OCI-LY7 (cell line): ENCODE measurements at regions of chr5 and their contacts with region 1.

Region 1: GRCh38 chr5:170791325-170791954 is 7.9 kb downstream of the GABRP start:
- DNase-seq: peak; percentile 22
- H3K4me3 ChIP-seq: no peak overlapping the region
- H3K27ac ChIP-seq: no peak overlapping the region
- H3K4me1 ChIP-seq: no peaks in the 10 kb centered on the region
- CTCF ChIP-seq: peak; percentile 68

Region 2: DNA sequence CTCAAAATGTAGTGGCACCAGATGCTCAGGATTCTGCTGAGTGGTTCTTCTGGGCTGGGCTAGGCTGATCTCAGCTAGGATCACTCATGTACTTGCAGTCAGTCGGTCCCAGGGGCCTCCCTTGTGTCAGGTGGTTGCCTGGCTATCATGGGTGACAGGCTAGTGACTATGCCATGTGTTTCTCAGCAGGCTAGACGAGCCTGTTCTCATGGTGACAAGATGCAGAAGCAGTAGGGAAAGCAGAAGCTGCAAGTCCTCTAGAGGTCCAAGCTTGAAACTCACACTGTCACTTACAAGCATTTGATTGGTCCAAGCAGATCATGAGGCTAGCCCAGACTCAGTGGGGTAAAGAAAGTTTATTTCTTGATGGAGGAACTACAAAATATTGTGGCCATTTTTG is 387.0 kb before region 1 on chr5:
- CTCF ChIA-PET with region 1: no interaction called
- POLR2A ChIA-PET with region 1: no interaction called
- intact Hi-C with region 1: no loop called
- DNase-seq: peak; percentile 6
- H3K4me3 ChIP-seq: no peak overlapping the region
- H3K27ac ChIP-seq: no peak overlapping the region
- H3K4me1 ChIP-seq: no peaks in the 10 kb centered on the region
- CTCF ChIP-seq: no peak

Region 3: DNA sequence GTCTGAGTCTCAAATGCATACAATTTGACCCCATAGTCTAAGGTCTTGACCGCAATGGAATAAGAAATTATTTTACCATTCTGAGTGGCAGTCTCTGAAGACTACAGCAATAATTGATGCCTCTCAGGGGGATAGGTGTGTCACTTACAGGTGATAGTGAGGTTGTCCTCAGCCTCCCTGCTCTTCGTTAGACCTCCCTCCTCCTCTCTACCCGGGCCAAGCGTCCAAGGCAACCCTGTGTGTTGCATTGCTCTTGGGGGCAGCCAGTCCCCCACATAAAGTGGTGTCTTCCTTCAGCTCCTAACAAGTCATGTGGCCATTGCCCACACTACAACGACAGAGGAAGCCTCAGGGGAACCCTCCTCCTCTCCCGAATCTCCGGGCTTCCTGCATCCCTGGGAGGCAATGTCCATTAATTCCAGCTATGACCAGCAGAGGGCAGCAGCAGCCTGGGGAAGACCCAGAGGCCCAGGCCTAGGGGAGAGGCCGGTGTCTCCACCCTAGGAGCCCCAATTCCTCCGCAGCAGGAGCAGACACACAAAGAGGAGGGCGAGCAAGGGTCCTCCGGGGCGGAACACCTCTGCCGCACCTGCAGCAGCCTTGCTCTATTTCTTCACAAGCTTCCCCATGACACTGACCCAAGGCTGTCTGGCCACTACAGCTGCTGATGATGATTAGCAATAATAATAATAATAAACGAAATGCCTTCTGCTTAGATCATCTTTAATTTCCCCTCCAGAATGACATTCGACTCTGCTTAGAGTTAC is 152.8 kb before region 1 on chr5:
- CTCF ChIA-PET with region 1: no interaction called
- POLR2A ChIA-PET with region 1: no interaction called
- intact Hi-C with region 1: loop called (anchors 1 kb)
- DNase-seq: peak; percentile 49
- H3K4me3 ChIP-seq: no peak overlapping the region
- H3K27ac ChIP-seq: no peak overlapping the region
- H3K4me1 ChIP-seq: no peaks in the 10 kb centered on the region
- CTCF ChIP-seq: peak; percentile 87